ENCODE measurements at regions of chr12 and their contacts with region 1.

Region 1: DNA sequence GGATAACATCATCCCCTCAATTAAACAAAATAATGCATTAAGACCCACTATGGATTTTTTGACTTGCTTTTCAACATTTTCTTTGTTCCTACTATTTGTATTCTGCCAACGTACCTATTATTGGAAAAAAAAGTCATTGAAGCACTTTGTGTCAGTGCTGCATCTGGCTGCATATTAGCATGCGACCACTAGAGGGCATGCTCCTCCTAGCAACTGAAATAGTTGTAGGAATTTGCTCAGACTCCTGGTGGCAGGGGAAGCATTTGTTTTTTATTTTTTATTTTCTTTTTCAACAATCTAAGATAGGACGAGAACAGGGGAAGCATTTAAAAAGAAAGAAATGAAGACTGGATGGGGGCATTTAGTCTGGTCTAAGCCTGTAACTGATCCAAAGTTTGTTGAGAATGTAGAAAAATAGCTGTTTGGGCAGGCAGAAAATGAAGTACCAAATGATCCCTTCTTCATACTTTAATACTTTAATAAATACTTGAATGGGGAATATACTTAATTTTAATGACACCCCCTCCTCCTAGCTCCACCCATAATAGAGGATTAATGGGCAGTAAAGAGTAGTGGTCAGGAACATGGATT is 14.5 kb upstream of the CLEC4A start:
- DNase-seq: peak; percentile 71
- H3K4me3 ChIP-seq: peak overlapping the region in 1 of 2 experiments; percentile 23; a peak in 1 of 4 replicates
- H3K27ac ChIP-seq: no peak overlapping the region
- H3K4me1 ChIP-seq: no peaks in the 10 kb centered on the region
- H3K27me3 ChIP-seq: no peaks in the 10 kb centered on the region
- CTCF ChIP-seq: peak; percentile 100
- EP300 ChIP-seq: no peak
- RAD21 ChIP-seq: peak; percentile 97

Region 2: GRCh38 chr12:7787574-7788300 is 321.2 kb before region 1 on chr12:
- CTCF ChIA-PET with region 1: no interaction called
- POLR2A ChIA-PET with region 1: no interaction called
- DNase-seq: no peak
- H3K4me3 ChIP-seq: no peak overlapping the region
- H3K27ac ChIP-seq: no peak overlapping the region
- H3K4me1 ChIP-seq: no peaks in the 10 kb centered on the region
- H3K27me3 ChIP-seq: peaks cover 49% of the 10 kb centered on the region; the same call in 1 of the 2 replicates
- CTCF ChIP-seq: no peak
- EP300 ChIP-seq: no peak
- RAD21 ChIP-seq: no peak

Region 3: DNA sequence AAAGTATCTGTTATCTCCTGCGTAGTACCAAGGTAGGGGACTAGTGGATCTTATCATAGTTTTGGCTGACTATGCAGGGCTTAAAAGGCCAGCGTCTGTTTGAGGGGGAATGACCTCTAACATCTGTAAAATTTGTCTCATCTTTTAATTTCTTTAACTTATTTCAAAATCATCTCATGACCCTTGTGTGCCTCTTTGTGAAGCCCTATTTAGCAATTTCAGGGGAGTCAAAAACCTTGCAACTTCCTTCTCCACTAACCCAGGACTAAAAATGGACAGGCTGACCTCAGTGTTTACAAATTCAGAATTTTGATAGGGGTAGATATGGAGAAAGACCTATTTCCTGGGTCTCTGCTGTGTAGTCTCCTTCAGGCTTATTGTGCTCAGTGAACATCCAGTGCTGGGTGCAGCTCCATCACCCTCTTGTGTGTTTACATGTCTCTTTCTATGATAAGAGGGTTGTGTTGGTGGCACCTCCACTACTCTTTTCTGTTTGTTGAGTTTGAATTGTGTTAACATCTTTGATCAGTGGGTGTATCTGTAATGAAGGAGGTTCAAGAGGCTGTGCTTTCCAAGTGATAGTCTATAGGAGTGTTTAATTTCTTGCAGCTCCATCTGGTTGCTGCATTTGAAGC is 12.5 kb before region 1 on chr12:
- CTCF ChIA-PET with region 1: interaction called, 10 read pairs
- POLR2A ChIA-PET with region 1: no interaction called
- DNase-seq: no peak
- H3K4me3 ChIP-seq: no peak overlapping the region
- H3K27ac ChIP-seq: no peak overlapping the region
- H3K4me1 ChIP-seq: no peaks in the 10 kb centered on the region
- H3K27me3 ChIP-seq: no peaks in the 10 kb centered on the region
- CTCF ChIP-seq: no peak
- EP300 ChIP-seq: no peak
- RAD21 ChIP-seq: no peak

Region 4: DNA sequence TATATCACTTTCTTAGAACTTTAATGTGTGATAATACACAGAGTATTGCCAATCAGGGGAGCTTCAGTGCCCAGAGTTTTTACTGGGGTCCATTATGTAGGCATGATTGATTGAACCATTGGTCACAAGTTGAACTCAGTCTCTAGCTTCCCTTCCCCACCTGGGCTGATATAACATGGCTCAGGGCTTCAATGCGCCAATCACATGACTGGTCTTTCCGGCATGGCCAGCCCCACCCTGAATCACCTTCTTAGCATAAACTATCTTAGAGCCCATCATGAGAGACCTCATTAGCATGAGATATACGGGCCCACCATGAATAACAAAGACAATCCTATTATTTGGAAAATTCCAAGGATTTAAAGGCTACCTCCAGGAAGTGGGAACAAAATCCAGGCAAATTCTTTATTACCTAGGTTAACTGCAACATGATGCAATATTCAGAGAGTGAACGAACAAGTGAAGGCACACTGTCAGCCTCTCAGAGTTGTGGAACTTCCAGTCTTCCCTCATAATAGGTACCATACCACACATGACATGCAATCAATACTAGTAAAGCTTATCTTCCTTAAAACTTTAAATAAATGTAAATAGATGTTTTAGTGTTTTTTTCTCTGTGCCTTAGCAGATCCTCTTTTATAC is 11.3 kb after region 1 on chr12:
- CTCF ChIA-PET with region 1: interaction called, 28 read pairs
- POLR2A ChIA-PET with region 1: no interaction called
- DNase-seq: no peak
- H3K4me3 ChIP-seq: no peak overlapping the region
- H3K27ac ChIP-seq: no peak overlapping the region
- H3K4me1 ChIP-seq: no peaks in the 10 kb centered on the region
- H3K27me3 ChIP-seq: no peaks in the 10 kb centered on the region
- CTCF ChIP-seq: no peak
- EP300 ChIP-seq: no peak
- RAD21 ChIP-seq: no peak

Region 5: GRCh38 chr12:8127138-8127537 is 18.2 kb after region 1 on chr12:
- CTCF ChIA-PET with region 1: interaction called, 12 read pairs
- POLR2A ChIA-PET with region 1: no interaction called
- DNase-seq: no peak
- H3K4me3 ChIP-seq: no peak overlapping the region
- H3K27ac ChIP-seq: no peak overlapping the region
- H3K4me1 ChIP-seq: no peaks in the 10 kb centered on the region
- H3K27me3 ChIP-seq: no peaks in the 10 kb centered on the region
- CTCF ChIP-seq: no peak
- EP300 ChIP-seq: no peak
- RAD21 ChIP-seq: no peak

Region 6: DNA sequence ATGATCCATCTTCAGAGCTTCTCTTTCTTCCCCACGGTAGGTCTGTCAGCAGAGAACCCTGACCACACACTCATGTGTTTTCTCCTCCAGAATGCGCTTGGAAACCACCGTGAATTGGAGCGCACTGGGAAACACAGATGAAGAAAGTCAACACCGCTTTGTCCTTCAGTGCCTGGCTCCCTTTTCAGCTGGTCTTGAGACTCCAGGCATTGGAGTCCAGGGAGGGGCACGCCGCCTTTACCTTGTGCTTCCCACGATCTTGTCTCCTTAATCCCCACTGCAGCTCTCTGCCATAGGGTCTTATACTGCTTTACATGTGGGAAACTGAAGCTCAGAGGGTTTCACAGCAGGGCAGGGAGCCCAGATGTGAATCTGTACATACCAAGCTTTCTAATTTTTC is 117.5 kb after region 1 on chr12:
- CTCF ChIA-PET with region 1: interaction called, 17 read pairs
- POLR2A ChIA-PET with region 1: no interaction called
- DNase-seq: no peak
- H3K4me3 ChIP-seq: no peak overlapping the region
- H3K27ac ChIP-seq: no peak overlapping the region
- H3K4me1 ChIP-seq: no peaks in the 10 kb centered on the region
- H3K27me3 ChIP-seq: no peaks in the 10 kb centered on the region
- CTCF ChIP-seq: no peak
- EP300 ChIP-seq: no peak
- RAD21 ChIP-seq: no peak

Region 7: DNA sequence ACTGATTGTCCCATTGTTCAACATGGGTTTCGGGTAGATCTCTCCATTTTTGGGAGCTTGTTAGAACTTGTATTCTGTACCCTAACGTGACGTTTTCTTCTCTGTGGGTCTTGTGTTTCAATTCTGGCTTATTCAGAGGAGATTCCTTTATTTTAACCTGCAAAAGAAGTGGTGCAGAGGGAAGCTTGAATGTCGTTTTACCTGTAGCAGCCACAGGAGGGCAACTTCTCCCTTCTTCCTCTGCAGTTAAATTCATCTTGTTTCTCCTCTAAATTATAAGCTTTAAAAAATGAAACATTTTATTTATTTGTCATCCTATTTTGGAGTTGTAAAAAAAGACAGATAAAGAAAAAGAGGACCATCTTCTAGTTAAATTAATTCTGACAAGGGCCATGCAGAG is 390.7 kb after region 1 on chr12:
- CTCF ChIA-PET with region 1: no interaction called
- POLR2A ChIA-PET with region 1: no interaction called
- DNase-seq: no peak
- H3K4me3 ChIP-seq: no peak overlapping the region
- H3K27ac ChIP-seq: no peak overlapping the region
- H3K4me1 ChIP-seq: no peaks in the 10 kb centered on the region
- H3K27me3 ChIP-seq: no peaks in the 10 kb centered on the region
- CTCF ChIP-seq: no peak
- EP300 ChIP-seq: no peak
- RAD21 ChIP-seq: no peak

Measured in SK-N-SH (cell line).